ENCODE measurements at regions of chr2 and their contacts with region 1.

Region 1: GRCh38 chr2:3780477-3781402 is 77.4 kb downstream of the DCDC2C start:
- DNase-seq: peak; percentile 62 to 81 (median 69)
- H3K4me3 ChIP-seq: peak overlapping the region in 5 of 7 experiments; percentile 11 to 70 (median 36)
- H3K27ac ChIP-seq: no peak overlapping the region
- H3K4me1 ChIP-seq: peaks cover 2 to 34% (median 20%) of the 10 kb centered on the region in 4 experiments
- H3K27me3 ChIP-seq: no peaks in the 10 kb centered on the region

Region 2: GRCh38 chr2:3738454-3738853 is 42.3 kb before region 1 on chr2:
- CTCF ChIA-PET with region 1: interaction called, 13 read pairs
- POLR2A ChIA-PET with region 1: no interaction called
- DNase-seq: peak; percentile 22 to 45 (median 23)
- H3K4me3 ChIP-seq: no peak overlapping the region
- H3K27ac ChIP-seq: no peak overlapping the region
- H3K4me1 ChIP-seq: peaks cover 4 to 33% (median 15%) of the 10 kb centered on the region in 4 experiments
- H3K27me3 ChIP-seq: peaks cover 0 to 2% (median 0%) of the 10 kb centered on the region in 5 experiments

Region 3: GRCh38 chr2:3768960-3769765 is 11.6 kb before region 1 on chr2:
- CTCF ChIA-PET with region 1: interaction called, 19 read pairs
- POLR2A ChIA-PET with region 1: no interaction called
- DNase-seq: no peak
- H3K4me3 ChIP-seq: no peak overlapping the region
- H3K27ac ChIP-seq: no peak overlapping the region
- H3K4me1 ChIP-seq: peaks cover 0 to 2% (median 0%) of the 10 kb centered on the region in 4 experiments
- H3K27me3 ChIP-seq: no peaks in the 10 kb centered on the region

Measured in common myeloid progenitor, CD34-positive (primary cell).